ENCODE measurements at regions of chr7 and their contacts with region 1.

Region 1: GRCh38 chr7:21939136-21939857 is 6.4 kb downstream of the CDCA7L start:
- DNase-seq: no peak
- ATAC-seq: no peak
- H3K4me3 ChIP-seq: no peak overlapping the region
- H3K27ac ChIP-seq: no peak overlapping the region
- H3K4me1 ChIP-seq: peaks cover 5% of the 10 kb centered on the region
- H3K27me3 ChIP-seq: no peaks in the 10 kb centered on the region
- CTCF ChIP-seq: no peak
- POLR2A ChIP-seq: no peak
- RAD21 ChIP-seq: no peak

Region 2: DNA sequence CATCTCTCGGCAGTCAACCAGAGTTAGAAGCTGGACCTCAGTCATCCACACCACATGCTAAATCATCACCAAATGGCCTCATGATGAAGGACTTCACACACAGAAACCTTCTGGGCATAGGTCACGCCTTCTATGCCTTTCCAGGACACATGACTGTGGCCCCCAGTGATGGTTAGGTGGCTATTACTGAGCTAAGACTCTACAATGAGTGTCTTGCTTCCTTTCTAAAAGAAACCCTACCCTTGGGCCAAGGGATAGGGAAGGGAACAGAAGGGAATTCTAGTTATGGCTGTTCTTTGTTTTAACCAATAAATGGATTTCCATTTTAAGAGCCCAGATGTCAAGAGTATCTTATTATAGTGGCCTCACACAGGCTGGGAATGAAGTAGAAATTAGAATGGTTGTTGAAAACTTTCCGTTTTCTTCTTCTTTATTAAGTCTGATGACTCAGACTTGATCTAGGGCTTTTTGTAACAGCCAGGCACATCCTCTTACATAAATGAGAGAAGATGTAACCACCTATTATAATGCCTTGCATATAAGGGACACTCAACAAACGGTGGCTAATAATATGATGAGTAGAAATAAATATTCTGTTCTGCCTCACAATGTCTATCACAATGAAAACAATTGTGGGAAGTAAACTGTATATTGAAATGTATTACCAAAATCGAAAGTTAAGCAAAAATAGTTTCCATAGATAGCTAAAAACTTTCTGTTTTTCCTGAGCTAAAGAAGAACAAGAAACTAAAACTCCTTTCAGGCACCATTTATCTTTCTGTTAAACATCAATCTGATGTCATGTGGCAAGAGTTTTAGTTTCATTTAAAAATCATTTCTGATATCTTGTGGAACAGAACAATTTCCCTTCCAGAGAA is 945.9 kb after region 1 on chr7:
- CTCF ChIA-PET with region 1: no interaction called
- POLR2A ChIA-PET with region 1: no interaction called
- dilution Hi-C with region 1: no loop called
- in situ Hi-C with region 1: no loop called
- intact Hi-C with region 1: loop called (anchors 5 kb)
- DNase-seq: peak; percentile 33
- ATAC-seq: no peak
- H3K4me3 ChIP-seq: no peak overlapping the region
- H3K27ac ChIP-seq: no peak overlapping the region
- H3K4me1 ChIP-seq: peaks cover 4% of the 10 kb centered on the region
- H3K27me3 ChIP-seq: no peaks in the 10 kb centered on the region
- CTCF ChIP-seq: no peak
- POLR2A ChIP-seq: no peak
- RAD21 ChIP-seq: no peak

Measured in IMR-90 (cell line).